Spleen (tissue), 13 donors: ENCODE measurements at regions of chr1 and their contacts with region 1.

Region 1: GRCh38 chr1:155323798-155324610 is 3.3 kb downstream of the RUSC1 start:
- DNase-seq: peak; percentile 98
- H3K4me3 ChIP-seq: peak overlapping the region; percentile 80 to 97 (median 89)
- H3K27ac ChIP-seq: peak overlapping the region; percentile 95 to 99 (median 96)
- H3K4me1 ChIP-seq: peaks cover 20 to 70% (median 48%) of the 10 kb centered on the region in 6 donors
- H3K27me3 ChIP-seq: no peaks in the 10 kb centered on the region
- CTCF ChIP-seq: peak in 2 of 11 experiments; percentile 9
- POLR2A ChIP-seq: peak in 2 of 3 donors; percentile 52 to 65

Region 2: GRCh38 chr1:155277070-155277895 is 46.7 kb before region 1 on chr1 and contains the start of gene HCN3:
- intact Hi-C with region 1: loop called (anchors 10 kb)
- DNase-seq: peak; percentile 97
- H3K4me3 ChIP-seq: peak within 1 kb of the TSS; percentile 49 to 86 (median 70)
- H3K27ac ChIP-seq: peak within 1 kb of the TSS in 6 of 8 donors; percentile 1 to 73 (median 53)
- H3K4me1 ChIP-seq: peaks cover 14 to 44% (median 37%) of the 10 kb centered on the region in 6 donors
- H3K27me3 ChIP-seq: peaks cover 0 to 8% (median 0%) of the 10 kb centered on the region in 7 donors
- CTCF ChIP-seq: peak in 10 of 11 experiments; percentile 7 to 95 (median 86)
- POLR2A ChIP-seq: no peak
- total RNA-seq, gene HCN3: 0.65 to 3.3 (median 1.9) TPM